ENCODE measurements at regions of chr15 and their contacts with region 1.

Region 1: DNA sequence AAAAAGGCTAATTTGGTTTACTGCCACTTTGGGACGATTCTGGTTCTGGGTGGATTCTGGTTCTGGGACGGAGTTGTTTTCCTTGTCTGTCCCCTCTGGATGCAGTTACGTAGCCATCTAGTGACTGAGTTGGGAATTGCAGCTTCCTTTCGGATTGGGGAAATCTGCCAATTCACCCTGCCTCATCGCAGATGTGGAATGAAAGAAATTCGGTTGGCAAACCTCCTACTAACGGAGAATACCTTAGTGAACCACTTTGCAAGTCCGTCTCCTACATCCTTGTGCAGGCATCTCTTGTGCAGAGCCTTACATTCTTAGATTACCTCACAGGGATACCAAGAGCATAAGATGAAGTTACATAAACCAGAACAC is 31.5 kb upstream of the AP4E1 start:
- DNase-seq: peak; percentile 83 to 88
- H3K4me3 ChIP-seq: no peak overlapping the region
- H3K4me3 Mint-ChIP-seq: peak overlapping the region; percentile 52
- H3K27ac Mint-ChIP-seq: peak overlapping the region; percentile 77
- H3K4me1 ChIP-seq: peaks cover 46% of the 10 kb centered on the region
- H3K4me1 Mint-ChIP-seq: peaks cover 53% of the 10 kb centered on the region
- H3K27me3 ChIP-seq: no peaks in the 10 kb centered on the region
- H3K27me3 Mint-ChIP-seq: no peaks in the 10 kb centered on the region
- CTCF ChIP-seq: peak; percentile 82 to 91

Region 2: DNA sequence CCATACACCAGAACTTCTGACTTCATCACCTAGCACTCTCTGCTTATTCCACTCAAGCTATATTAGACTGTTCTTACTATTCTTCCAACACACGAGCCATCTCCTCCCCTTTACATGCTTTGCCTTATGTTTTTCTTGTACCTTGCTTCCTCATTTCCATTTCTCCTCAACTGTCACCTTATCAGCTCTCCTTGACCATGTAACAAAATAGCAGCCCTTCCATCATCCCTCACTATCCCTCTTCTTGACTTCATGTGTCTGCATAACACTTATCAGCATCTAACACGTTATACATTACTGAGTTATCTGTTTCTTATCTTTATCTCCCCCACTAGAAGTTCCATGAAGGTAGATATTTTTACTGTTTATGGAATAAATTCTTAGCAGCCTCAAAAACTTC is 235.7 kb before region 1 on chr15:
- CTCF ChIA-PET with region 1: interaction called, 11 read pairs
- POLR2A ChIA-PET with region 1: no interaction called
- intact Hi-C with region 1: no loop called
- DNase-seq: no peak
- H3K4me3 ChIP-seq: no peak overlapping the region
- H3K4me3 Mint-ChIP-seq: no peak overlapping the region
- H3K27ac Mint-ChIP-seq: no peak overlapping the region
- H3K4me1 ChIP-seq: peaks cover 28% of the 10 kb centered on the region
- H3K4me1 Mint-ChIP-seq: peaks cover 13% of the 10 kb centered on the region
- H3K27me3 ChIP-seq: no peaks in the 10 kb centered on the region
- H3K27me3 Mint-ChIP-seq: no peaks in the 10 kb centered on the region
- CTCF ChIP-seq: no peak

Region 3: GRCh38 chr15:50675536-50676144 is 201.3 kb before region 1 on chr15:
- CTCF ChIA-PET with region 1: no interaction called
- POLR2A ChIA-PET with region 1: no interaction called
- intact Hi-C with region 1: loop called (anchors 1 kb)
- DNase-seq: peak in 1 of 2 experiments; percentile 25
- H3K4me3 ChIP-seq: no peak overlapping the region
- H3K4me3 Mint-ChIP-seq: no peak overlapping the region
- H3K27ac Mint-ChIP-seq: no peak overlapping the region
- H3K4me1 ChIP-seq: peaks cover 23% of the 10 kb centered on the region
- H3K4me1 Mint-ChIP-seq: peaks cover 14% of the 10 kb centered on the region
- H3K27me3 ChIP-seq: no peaks in the 10 kb centered on the region
- H3K27me3 Mint-ChIP-seq: no peaks in the 10 kb centered on the region
- CTCF ChIP-seq: peak; percentile 46 to 77

Region 4: DNA sequence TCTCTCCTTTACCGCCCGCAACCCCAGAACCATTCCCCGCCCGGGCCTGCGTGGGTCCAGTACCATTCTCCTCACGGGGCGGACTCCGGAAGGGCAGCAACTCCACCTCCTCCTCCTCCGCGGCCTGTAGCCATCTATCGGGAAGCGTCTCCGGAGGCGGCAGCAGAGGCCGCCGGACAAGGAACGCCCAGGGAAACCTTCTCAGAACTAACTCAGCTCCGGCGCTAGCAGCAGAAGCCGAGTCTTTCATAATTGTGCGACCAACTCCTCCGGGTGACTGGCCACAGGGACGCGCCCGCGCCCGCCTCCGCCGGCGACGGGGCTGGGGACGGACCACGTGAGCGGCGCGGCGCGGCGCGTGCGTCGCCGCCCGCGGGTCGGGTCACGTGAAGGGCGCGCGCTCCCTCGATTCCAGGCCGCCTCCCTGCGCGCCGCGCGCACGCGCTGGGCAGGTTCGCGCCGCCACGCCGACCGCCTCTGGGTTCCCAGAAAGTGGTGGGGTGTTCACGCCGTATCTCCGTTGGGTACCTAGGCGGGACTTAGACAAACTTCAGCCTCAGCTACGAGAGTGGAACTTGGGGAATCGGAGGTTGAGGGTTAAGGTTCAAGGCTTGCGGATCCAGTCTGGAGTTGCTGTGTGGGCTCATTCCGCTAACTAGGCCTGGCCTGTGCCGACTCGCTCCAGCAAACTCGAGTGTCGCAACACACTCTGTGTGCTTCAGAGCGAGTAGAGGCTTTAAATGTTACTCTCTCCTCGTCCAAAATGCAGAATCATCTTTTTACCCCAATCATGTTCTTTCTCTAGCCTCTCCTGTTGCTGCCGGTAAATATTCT is 190.3 kb before region 1 on chr15 and contains the start of gene TRPM7:
- CTCF ChIA-PET with region 1: no interaction called
- POLR2A ChIA-PET with region 1: no interaction called
- intact Hi-C with region 1: loop called (anchors 2 kb)
- DNase-seq: peak; percentile 83 to 91
- H3K4me3 ChIP-seq: peak within 1 kb of the TSS; percentile 87
- H3K4me3 Mint-ChIP-seq: peak within 1 kb of the TSS; percentile 85
- H3K27ac Mint-ChIP-seq: peak within 1 kb of the TSS; percentile 98
- H3K4me1 ChIP-seq: peaks cover under 1% of the 10 kb centered on the region; the same call in 1 of the 2 replicates
- H3K4me1 Mint-ChIP-seq: peaks cover 13% of the 10 kb centered on the region
- H3K27me3 ChIP-seq: no peaks in the 10 kb centered on the region
- H3K27me3 Mint-ChIP-seq: no peaks in the 10 kb centered on the region
- CTCF ChIP-seq: peak in 1 of 2 experiments; percentile 5
- total RNA-seq, gene TRPM7: 70.9 and 73.4 TPM in 2 replicates

Region 5: GRCh38 chr15:50735156-50735555 is 141.8 kb before region 1 on chr15:
- CTCF ChIA-PET with region 1: no interaction called
- POLR2A ChIA-PET with region 1: no interaction called
- intact Hi-C with region 1: no loop called
- DNase-seq: no peak
- H3K4me3 ChIP-seq: no peak overlapping the region
- H3K4me3 Mint-ChIP-seq: no peak overlapping the region
- H3K27ac Mint-ChIP-seq: no peak overlapping the region
- H3K4me1 ChIP-seq: 0 out of 2 replicates have a peak, but pooled peaks cover 3% of the 10 kb centered on the region
- H3K4me1 Mint-ChIP-seq: no peaks in the 10 kb centered on the region
- H3K27me3 ChIP-seq: no peaks in the 10 kb centered on the region
- H3K27me3 Mint-ChIP-seq: no peaks in the 10 kb centered on the region
- CTCF ChIP-seq: no peak

Region 6: GRCh38 chr15:50747523-50747922 is 129.5 kb before region 1 on chr15:
- CTCF ChIA-PET with region 1: no interaction called
- POLR2A ChIA-PET with region 1: no interaction called
- intact Hi-C with region 1: no loop called
- DNase-seq: no peak
- H3K4me3 ChIP-seq: no peak overlapping the region
- H3K4me3 Mint-ChIP-seq: no peak overlapping the region
- H3K27ac Mint-ChIP-seq: no peak overlapping the region
- H3K4me1 ChIP-seq: no peaks in the 10 kb centered on the region; the same call in 1 of the 2 replicates
- H3K4me1 Mint-ChIP-seq: no peaks in the 10 kb centered on the region
- H3K27me3 ChIP-seq: no peaks in the 10 kb centered on the region
- H3K27me3 Mint-ChIP-seq: no peaks in the 10 kb centered on the region
- CTCF ChIP-seq: no peak

Region 7: GRCh38 chr15:50828610-50829219 is 48.3 kb before region 1 on chr15:
- CTCF ChIA-PET with region 1: no interaction called
- POLR2A ChIA-PET with region 1: no interaction called
- intact Hi-C with region 1: loop called (anchors 2 kb)
- DNase-seq: peak; percentile 74 to 79
- H3K4me3 ChIP-seq: no peak overlapping the region
- H3K4me3 Mint-ChIP-seq: peak overlapping the region; percentile 59
- H3K27ac Mint-ChIP-seq: peak overlapping the region; percentile 89
- H3K4me1 ChIP-seq: peaks cover 19% of the 10 kb centered on the region
- H3K4me1 Mint-ChIP-seq: peaks cover 15% of the 10 kb centered on the region
- H3K27me3 ChIP-seq: no peaks in the 10 kb centered on the region
- H3K27me3 Mint-ChIP-seq: no peaks in the 10 kb centered on the region
- CTCF ChIP-seq: peak in 1 of 2 experiments; percentile 21

Region 8: GRCh38 chr15:50855092-50855396 is 21.9 kb before region 1 on chr15:
- CTCF ChIA-PET with region 1: no interaction called
- POLR2A ChIA-PET with region 1: interaction called, 3 read pairs
- intact Hi-C with region 1: loop called (anchors 1 kb)
- DNase-seq: no peak
- H3K4me3 ChIP-seq: no peak overlapping the region
- H3K4me3 Mint-ChIP-seq: no peak overlapping the region
- H3K27ac Mint-ChIP-seq: peak overlapping the region; percentile 78
- H3K4me1 ChIP-seq: peaks cover 39% of the 10 kb centered on the region
- H3K4me1 Mint-ChIP-seq: peaks cover 25% of the 10 kb centered on the region
- H3K27me3 ChIP-seq: no peaks in the 10 kb centered on the region
- H3K27me3 Mint-ChIP-seq: no peaks in the 10 kb centered on the region
- CTCF ChIP-seq: no peak

Region 9: GRCh38 chr15:50865515-50866353 is 11.2 kb before region 1 on chr15:
- CTCF ChIA-PET with region 1: no interaction called
- POLR2A ChIA-PET with region 1: no interaction called
- intact Hi-C with region 1: loop called (anchors 1 kb)
- DNase-seq: no peak
- H3K4me3 ChIP-seq: no peak overlapping the region
- H3K4me3 Mint-ChIP-seq: no peak overlapping the region
- H3K27ac Mint-ChIP-seq: peak overlapping the region; percentile 76
- H3K4me1 ChIP-seq: peaks cover 53% of the 10 kb centered on the region
- H3K4me1 Mint-ChIP-seq: peaks cover 27% of the 10 kb centered on the region
- H3K27me3 ChIP-seq: no peaks in the 10 kb centered on the region
- H3K27me3 Mint-ChIP-seq: no peaks in the 10 kb centered on the region
- CTCF ChIP-seq: no peak

Region 10: DNA sequence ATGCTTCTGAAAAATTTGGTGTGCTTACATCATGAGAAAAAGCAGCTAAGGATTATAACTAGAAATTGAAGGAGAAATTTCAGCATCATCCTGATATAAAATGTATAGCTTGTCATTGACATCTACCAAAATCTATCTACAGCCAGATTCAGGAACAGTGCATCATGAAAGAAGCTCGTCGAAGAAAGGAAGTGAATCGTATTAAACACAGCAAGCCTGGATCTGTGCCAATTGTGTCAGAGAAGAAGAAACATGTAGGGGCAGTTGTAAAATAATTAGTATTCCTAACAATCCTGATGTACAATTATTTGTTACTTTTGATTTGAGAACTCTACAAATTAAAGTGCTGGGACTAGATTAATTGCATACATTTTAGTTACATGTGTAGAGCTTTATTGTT is 68.8 kb after region 1 on chr15:
- CTCF ChIA-PET with region 1: no interaction called
- POLR2A ChIA-PET with region 1: no interaction called
- intact Hi-C with region 1: no loop called
- DNase-seq: no peak
- H3K4me3 ChIP-seq: no peak overlapping the region
- H3K4me3 Mint-ChIP-seq: no peak overlapping the region
- H3K27ac Mint-ChIP-seq: no peak overlapping the region
- H3K4me1 ChIP-seq: no peaks in the 10 kb centered on the region
- H3K4me1 Mint-ChIP-seq: no peaks in the 10 kb centered on the region
- H3K27me3 ChIP-seq: no peaks in the 10 kb centered on the region
- H3K27me3 Mint-ChIP-seq: no peaks in the 10 kb centered on the region
- CTCF ChIP-seq: no peak